ENCODE measurements at regions of chr1 and their contacts with region 1.

Region 1: DNA sequence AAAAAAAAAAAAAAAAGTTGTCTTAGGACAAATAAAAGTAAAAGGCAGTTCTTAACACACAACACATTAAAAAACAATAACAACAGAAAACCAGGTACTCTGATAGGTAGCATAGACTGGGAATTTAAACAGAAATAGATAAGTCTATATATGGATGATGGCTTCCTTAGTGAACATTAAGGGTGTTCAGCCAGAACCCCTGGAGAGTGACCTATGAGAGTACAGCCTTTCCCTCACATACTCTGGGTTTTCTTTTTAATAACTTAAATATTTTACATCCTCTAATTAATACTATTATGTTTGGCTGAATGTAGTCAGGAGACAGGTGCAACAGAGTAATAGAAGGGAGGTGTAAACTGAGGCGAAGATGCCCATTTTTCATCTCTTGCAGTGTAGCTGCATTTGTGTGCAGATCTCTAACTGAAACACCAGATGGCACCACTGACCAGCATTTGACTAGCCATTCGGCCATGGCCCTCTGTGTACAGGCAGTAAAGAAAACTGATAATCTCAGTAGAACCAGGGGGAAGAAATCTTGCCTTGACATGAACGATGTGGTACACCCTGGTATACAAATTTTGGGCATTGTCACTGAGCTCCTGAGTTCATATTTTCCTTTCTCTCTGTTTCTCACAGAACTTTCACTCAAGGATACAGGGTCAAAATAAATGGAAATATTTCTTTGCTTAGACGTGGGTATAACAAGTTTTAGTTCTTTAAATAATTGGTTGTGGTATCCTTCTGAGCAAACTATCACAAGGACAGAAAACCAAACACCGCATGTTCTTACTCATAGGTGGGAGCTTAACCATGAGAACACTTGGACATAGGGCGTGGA is 7.6 kb downstream of the TTF2 start:
- DNase-seq: peak; percentile 70
- H3K4me3 ChIP-seq: no peak overlapping the region; a peak in 1 of 4 replicates
- H3K27ac ChIP-seq: no peak overlapping the region
- H3K4me1 ChIP-seq: no peaks in the 10 kb centered on the region
- H3K27me3 ChIP-seq: no peaks in the 10 kb centered on the region
- CTCF ChIP-seq: peak; percentile 89
- EP300 ChIP-seq: no peak
- RAD21 ChIP-seq: peak; percentile 97

Region 2: GRCh38 chr1:116934586-116935207 is 133.1 kb before region 1 on chr1:
- CTCF ChIA-PET with region 1: no interaction called
- POLR2A ChIA-PET with region 1: no interaction called
- DNase-seq: no peak
- H3K4me3 ChIP-seq: no peak overlapping the region
- H3K27ac ChIP-seq: no peak overlapping the region
- H3K4me1 ChIP-seq: no peaks in the 10 kb centered on the region; a peak in 1 of 4 replicates
- H3K27me3 ChIP-seq: no peaks in the 10 kb centered on the region
- CTCF ChIP-seq: peak; percentile 49
- EP300 ChIP-seq: no peak
- RAD21 ChIP-seq: peak; percentile 40

Region 3: DNA sequence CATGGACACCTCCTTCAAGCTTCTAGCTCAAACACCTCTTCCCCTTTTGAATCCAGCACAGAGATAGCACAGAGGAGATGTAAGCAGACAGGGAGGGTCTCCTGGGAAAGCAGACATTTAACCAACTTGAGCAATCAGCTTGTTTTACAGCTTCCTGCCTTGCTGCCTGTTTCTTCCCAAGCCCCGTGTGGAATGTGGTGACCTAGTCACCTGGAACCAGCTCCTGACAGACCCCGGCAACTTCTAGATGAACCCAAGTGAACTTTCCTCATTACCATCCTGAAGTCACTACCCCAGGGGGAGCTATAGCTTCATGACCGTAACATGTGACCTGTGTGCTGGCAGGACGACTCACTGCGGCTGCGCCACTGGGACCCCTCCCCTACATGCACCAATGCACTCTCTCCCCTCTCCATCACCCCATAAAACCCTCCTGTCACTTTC is 31.7 kb before region 1 on chr1:
- CTCF ChIA-PET with region 1: no interaction called
- POLR2A ChIA-PET with region 1: no interaction called
- DNase-seq: no peak
- H3K4me3 ChIP-seq: no peak overlapping the region
- H3K27ac ChIP-seq: peak overlapping the region in 1 of 2 experiments; percentile 85; a peak in 1 of 4 replicates
- H3K4me1 ChIP-seq: peaks cover 0 to 30% of the 10 kb centered on the region in 2 experiments; a peak in 2 of 4 replicates
- H3K27me3 ChIP-seq: no peaks in the 10 kb centered on the region
- CTCF ChIP-seq: no peak
- EP300 ChIP-seq: no peak
- RAD21 ChIP-seq: no peak

Region 4: GRCh38 chr1:117121776-117122697 is 54.3 kb after region 1 on chr1:
- CTCF ChIA-PET with region 1: interaction called, 24 read pairs
- POLR2A ChIA-PET with region 1: interaction called, 3 read pairs
- DNase-seq: peak; percentile 95
- H3K4me3 ChIP-seq: peak overlapping the region; percentile 66 to 80
- H3K27ac ChIP-seq: peak overlapping the region; percentile 88 to 92
- H3K4me1 ChIP-seq: peaks cover 4 to 10% of the 10 kb centered on the region in 2 experiments; a peak in 2 of 4 replicates
- H3K27me3 ChIP-seq: no peaks in the 10 kb centered on the region
- CTCF ChIP-seq: peak; percentile 87
- EP300 ChIP-seq: no peak
- RAD21 ChIP-seq: peak; percentile 62

Measured in SK-N-SH (cell line).